ENCODE measurements at regions of chr13 and their contacts with region 1.

Region 1: GRCh38 chr13:51452361-51453206 is at the start of gene INTS6:
- DNase-seq: no peak
- ATAC-seq: peak; percentile 98
- total RNA-seq, gene INTS6: 49.8 TPM

Region 2: DNA sequence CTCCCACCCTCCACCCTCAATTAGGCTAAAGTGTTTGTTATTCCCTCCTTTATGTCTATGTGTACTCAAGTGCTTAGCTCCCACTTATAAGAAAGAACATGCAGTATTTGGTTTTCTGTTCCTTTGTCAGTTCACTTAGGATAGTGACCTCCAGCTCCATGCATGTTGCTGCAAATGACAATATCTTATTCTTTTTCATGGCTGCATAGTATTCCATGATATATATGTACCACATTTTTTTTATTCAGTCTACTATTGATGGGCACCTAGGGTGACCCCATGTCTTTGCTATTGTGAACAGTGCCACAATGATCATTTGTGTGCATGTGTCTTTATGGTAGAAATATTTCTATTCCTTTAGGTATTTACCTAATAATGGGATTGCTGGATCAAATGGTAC is 723.4 kb before region 1 on chr13:
- intact Hi-C with region 1: no loop called
- DNase-seq: no peak
- ATAC-seq: no peak

Region 3: GRCh38 chr13:50740052-50740741 is 712.4 kb before region 1 on chr13:
- intact Hi-C with region 1: no loop called
- DNase-seq: no peak
- ATAC-seq: no peak

Region 4: DNA sequence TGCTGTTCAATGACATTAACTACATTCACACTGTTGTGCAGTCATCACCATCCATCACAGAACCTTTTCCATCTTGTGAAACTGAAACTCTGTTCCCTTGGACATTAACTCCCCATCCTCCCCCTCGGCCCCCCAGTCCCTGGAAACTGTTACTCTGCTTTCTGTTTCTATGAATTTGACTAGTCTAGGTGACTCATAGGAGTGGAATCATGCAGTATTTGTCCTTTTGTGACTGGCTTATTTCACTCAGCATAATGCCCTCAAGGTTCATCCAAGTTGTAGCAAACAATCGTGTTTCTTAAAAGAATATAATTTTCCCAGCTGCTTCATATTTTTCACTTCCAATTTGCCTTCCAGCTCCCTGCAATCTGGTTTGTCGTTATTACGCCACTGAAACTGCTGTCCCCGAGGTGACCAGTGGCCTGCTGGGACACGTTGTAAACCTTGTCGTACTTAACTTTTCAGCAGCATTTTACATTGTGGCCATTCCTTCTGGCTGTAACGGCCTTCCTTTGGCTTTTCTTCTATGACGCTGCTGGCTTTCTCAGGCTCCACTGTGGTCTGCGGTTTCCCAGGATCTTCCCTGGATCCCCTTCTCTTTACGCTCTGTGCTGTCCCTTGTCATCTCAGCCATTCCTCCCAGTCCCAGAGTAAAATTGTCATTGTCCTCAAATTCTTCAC is 277.4 kb after region 1 on chr13:
- intact Hi-C with region 1: loop called (anchors 5 kb)
- DNase-seq: no peak
- ATAC-seq: peak; percentile 75

Region 5: DNA sequence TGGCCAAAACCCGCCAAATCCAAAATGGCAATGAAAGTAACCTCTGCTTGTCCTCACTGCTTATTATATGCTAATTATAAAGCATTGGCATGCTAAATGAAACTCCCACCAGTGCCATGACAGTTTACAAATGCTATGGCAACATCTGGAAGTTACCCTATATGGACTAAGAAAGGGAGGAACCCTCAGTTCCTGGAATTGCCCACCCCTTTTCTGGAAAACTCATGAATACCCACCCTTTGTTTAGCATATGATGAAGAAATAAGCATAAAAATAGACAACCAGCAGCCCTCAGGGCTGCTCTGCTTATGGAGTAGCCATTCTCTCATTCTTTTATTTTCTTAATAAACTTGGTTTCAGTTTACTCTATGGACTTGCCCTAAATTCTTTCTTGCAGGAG is 1845.8 kb after region 1 on chr13:
- intact Hi-C with region 1: no loop called
- DNase-seq: no peak
- ATAC-seq: no peak